CD8-positive, alpha-beta T cell (primary cell): ENCODE measurements at regions of chr1 and their contacts with region 1.

Region 1: GRCh38 chr1:156226116-156226538 is 13.3 kb downstream of the PMF1 start:
- DNase-seq: no peak
- ATAC-seq: no peak
- H3K4me3 ChIP-seq: no peak overlapping the region
- H3K4me3 Mint-ChIP-seq: no peak overlapping the region
- H3K27ac ChIP-seq: peak overlapping the region in 1 of 2 experiments; percentile 3
- H3K27ac Mint-ChIP-seq: no peak overlapping the region
- H3K4me1 ChIP-seq: no peaks in the 10 kb centered on the region
- H3K4me1 Mint-ChIP-seq: peaks cover 16% of the 10 kb centered on the region
- H3K27me3 ChIP-seq: no peaks in the 10 kb centered on the region
- H3K27me3 Mint-ChIP-seq: no peaks in the 10 kb centered on the region
- CTCF ChIP-seq: no peak

Region 2: GRCh38 chr1:156090822-156091188 is 135.3 kb before region 1 on chr1:
- CTCF ChIA-PET with region 1: interaction called, 43 read pairs
- POLR2A ChIA-PET with region 1: interaction called, 3 read pairs
- intact Hi-C with region 1: loop called (anchors 1 kb)
- DNase-seq: peak; percentile 79 to 95 (median 89)
- ATAC-seq: peak; percentile 98
- H3K4me3 ChIP-seq: no peak overlapping the region
- H3K4me3 Mint-ChIP-seq: no peak overlapping the region
- H3K27ac ChIP-seq: no peak overlapping the region
- H3K27ac Mint-ChIP-seq: no peak overlapping the region
- H3K4me1 ChIP-seq: peaks cover 10% of the 10 kb centered on the region
- H3K4me1 Mint-ChIP-seq: peaks cover 3% of the 10 kb centered on the region
- H3K27me3 ChIP-seq: peaks cover 0 to 3% of the 10 kb centered on the region in 2 experiments
- H3K27me3 Mint-ChIP-seq: peaks cover 18% of the 10 kb centered on the region
- CTCF ChIP-seq: peak; percentile 76

Region 3: DNA sequence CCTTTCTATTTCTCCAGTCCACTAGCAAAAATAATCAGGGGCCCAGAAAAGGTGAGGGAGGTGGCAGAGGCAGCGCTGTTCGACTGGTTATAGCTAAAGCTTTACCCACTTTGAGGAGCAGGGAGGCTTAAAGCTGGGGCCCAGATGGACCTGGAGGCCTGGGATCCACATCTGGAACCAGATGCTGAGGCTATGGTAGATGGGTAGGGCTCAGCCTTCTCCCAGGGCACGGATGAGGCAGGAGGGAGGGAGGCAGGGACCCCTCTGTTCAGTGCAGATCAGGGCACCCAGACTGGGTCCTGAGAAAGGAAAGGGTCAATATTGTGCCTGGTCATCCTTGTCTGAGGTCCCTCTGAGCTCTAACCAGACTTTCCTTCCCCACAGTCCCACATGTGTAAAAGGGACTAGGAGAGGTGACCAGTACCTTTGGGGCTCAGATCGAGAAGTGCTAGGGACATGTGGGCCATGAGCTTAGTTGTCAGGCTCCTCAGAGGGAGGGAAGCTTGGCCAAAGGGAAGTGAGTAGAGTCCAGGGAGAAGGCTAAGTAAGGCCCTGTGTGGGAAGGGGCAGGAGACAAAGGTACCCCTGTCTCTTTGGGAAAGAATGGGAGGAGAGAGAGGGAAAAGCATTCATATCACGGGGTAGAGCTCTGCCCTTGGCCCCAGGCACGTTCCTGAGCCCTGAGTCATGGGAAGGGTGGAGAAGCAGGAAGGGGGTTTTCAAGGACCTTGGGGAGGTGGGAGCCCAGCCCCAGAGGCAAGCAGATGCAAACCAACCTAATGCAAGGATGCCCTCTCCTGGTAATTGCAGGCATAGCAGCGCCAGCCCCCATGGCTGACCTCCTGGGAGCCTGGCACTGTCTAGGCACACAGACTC is 96.2 kb before region 1 on chr1:
- CTCF ChIA-PET with region 1: interaction called, 44 read pairs
- POLR2A ChIA-PET with region 1: no interaction called
- intact Hi-C with region 1: no loop called
- DNase-seq: peak; percentile 60 to 87 (median 78)
- ATAC-seq: peak; percentile 29
- H3K4me3 ChIP-seq: no peak overlapping the region
- H3K4me3 Mint-ChIP-seq: no peak overlapping the region
- H3K27ac ChIP-seq: no peak overlapping the region
- H3K27ac Mint-ChIP-seq: peak overlapping the region; percentile 55
- H3K4me1 ChIP-seq: peaks cover 46% of the 10 kb centered on the region
- H3K4me1 Mint-ChIP-seq: peaks cover 37% of the 10 kb centered on the region
- H3K27me3 ChIP-seq: no peaks in the 10 kb centered on the region
- H3K27me3 Mint-ChIP-seq: peaks cover 2% of the 10 kb centered on the region
- CTCF ChIP-seq: peak; percentile 85

Region 4: GRCh38 chr1:156160743-156161171 is 65.4 kb before region 1 on chr1:
- CTCF ChIA-PET with region 1: interaction called, 10 read pairs
- POLR2A ChIA-PET with region 1: no interaction called
- intact Hi-C with region 1: no loop called
- DNase-seq: peak in 8 of 9 experiments; percentile 38 to 77 (median 66)
- ATAC-seq: peak; percentile 91
- H3K4me3 ChIP-seq: peak overlapping the region; percentile 41 to 51
- H3K4me3 Mint-ChIP-seq: peak overlapping the region; percentile 83
- H3K27ac ChIP-seq: no peak overlapping the region
- H3K27ac Mint-ChIP-seq: peak overlapping the region; percentile 72
- H3K4me1 ChIP-seq: peaks cover 4% of the 10 kb centered on the region
- H3K4me1 Mint-ChIP-seq: peaks cover 29% of the 10 kb centered on the region
- H3K27me3 ChIP-seq: no peaks in the 10 kb centered on the region
- H3K27me3 Mint-ChIP-seq: no peaks in the 10 kb centered on the region
- CTCF ChIP-seq: no peak

Region 5: DNA sequence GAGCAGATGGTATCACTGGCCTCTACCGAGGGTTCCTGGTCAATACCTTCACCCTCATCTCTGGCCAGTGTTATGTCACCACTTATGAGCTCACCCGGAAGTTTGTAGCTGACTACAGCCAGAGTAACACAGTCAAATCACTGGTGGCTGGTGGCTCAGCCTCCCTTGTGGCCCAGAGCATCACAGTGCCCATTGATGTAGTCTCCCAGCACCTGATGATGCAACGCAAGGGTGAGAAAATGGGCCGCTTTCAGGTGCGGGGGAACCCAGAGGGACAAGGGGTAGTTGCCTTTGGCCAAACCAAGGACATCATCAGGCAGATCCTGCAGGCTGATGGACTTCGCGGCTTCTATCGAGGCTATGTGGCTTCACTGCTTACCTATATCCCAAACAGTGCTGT is 26.1 kb before region 1 on chr1:
- CTCF ChIA-PET with region 1: interaction called, 17 read pairs
- POLR2A ChIA-PET with region 1: no interaction called
- intact Hi-C with region 1: no loop called
- DNase-seq: no peak
- ATAC-seq: no peak
- H3K4me3 ChIP-seq: no peak overlapping the region
- H3K4me3 Mint-ChIP-seq: no peak overlapping the region
- H3K27ac ChIP-seq: no peak overlapping the region
- H3K27ac Mint-ChIP-seq: peak overlapping the region; percentile 71
- H3K4me1 ChIP-seq: peaks cover 13% of the 10 kb centered on the region
- H3K4me1 Mint-ChIP-seq: peaks cover 49% of the 10 kb centered on the region
- H3K27me3 ChIP-seq: no peaks in the 10 kb centered on the region
- H3K27me3 Mint-ChIP-seq: no peaks in the 10 kb centered on the region
- CTCF ChIP-seq: no peak

Region 6: DNA sequence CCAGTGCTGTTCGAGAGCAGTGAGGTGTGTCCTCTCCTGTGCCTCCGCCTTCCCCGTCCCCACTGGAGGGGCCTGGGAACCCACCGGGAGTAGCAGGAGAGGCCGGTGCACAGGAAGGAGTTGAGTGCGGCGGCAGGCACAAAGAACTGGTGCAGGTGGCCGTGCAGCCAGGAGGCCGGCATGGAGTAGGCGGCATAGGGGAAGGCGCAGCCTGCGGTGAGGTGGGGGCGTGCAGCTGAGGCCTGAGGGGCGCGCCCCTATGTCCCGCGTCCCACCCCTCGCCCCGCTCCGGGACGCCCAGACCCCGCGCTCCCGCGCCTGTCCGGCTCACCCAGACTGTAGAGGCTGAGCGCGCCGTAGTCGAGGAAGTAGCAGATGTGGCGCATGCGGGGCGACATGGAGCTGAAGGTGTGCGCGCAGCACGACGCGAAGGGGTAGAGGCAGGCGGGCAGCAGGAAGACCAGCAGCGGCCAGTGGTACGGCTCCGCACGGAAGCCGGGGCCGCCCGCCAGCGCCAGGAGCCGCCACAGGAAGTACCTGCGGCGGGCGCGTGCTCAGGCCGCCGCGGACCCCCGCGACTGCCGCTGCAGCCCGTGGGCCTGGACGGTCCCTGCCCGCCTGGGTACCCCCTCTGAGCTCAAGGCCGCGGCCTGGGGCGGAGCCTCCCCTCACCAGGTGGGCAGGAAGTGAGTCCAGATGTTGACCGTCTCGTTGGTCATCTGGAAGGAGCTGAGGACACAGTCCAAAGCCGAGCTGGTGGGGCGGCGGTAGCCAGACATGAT is 19.5 kb after region 1 on chr1:
- CTCF ChIA-PET with region 1: interaction called, 11 read pairs
- POLR2A ChIA-PET with region 1: interaction called, 3 read pairs
- intact Hi-C with region 1: no loop called
- DNase-seq: peak in 8 of 9 experiments; percentile 14 to 65 (median 42)
- ATAC-seq: peak; percentile 71
- H3K4me3 ChIP-seq: peak overlapping the region; percentile 40 to 54
- H3K4me3 Mint-ChIP-seq: peak overlapping the region; percentile 85
- H3K27ac ChIP-seq: peak overlapping the region in 1 of 2 experiments; percentile 20
- H3K27ac Mint-ChIP-seq: peak overlapping the region; percentile 25
- H3K4me1 ChIP-seq: peaks cover 17% of the 10 kb centered on the region
- H3K4me1 Mint-ChIP-seq: peaks cover 18% of the 10 kb centered on the region
- H3K27me3 ChIP-seq: no peaks in the 10 kb centered on the region
- H3K27me3 Mint-ChIP-seq: no peaks in the 10 kb centered on the region
- CTCF ChIP-seq: no peak